Adrenal gland (tissue), 19 donors: ENCODE measurements at regions of chr3 and their contacts with region 1.

Region 1: DNA sequence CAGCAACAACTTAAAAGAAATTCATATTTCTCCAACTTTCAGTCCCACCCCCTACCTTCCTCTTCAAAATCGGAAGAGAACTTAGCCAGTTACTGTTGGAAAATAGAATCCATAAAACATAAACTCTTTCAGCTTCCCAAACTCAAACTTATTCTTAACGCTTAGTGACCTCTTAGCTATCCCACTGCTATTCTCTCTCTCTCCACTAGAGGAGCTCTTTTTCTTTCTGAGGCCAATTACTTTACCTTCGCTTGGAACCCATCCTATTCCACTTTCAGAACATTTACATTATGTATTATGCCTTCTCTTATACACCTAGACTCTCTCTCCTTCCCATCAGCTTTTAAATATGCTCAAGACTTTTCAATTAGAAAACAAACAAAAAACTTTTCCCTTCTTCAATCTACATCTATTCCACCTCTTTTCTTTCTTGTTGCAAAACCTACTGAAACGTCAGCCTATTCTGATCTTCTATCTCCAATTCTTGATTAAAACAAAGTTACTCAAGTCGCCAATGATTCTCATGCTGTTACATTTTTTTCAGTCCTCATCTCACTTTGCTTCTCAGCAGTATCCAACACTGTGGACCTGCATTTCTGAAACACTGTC is 13.4 kb upstream of the GHSR start:
- DNase-seq: no peak
- H3K4me3 ChIP-seq: no peak overlapping the region
- H3K27ac ChIP-seq: no peak overlapping the region
- H3K4me1 ChIP-seq: no peaks in the 10 kb centered on the region
- H3K27me3 ChIP-seq: no peaks in the 10 kb centered on the region
- CTCF ChIP-seq: peak; percentile 65 to 95 (median 84)
- POLR2A ChIP-seq: no peak

Region 2: GRCh38 chr3:171974986-171975837 is 486.4 kb before region 1 on chr3:
- intact Hi-C with region 1: no loop called
- DNase-seq: no peak
- H3K4me3 ChIP-seq: no peak overlapping the region
- H3K27ac ChIP-seq: peak overlapping the region in 1 of 5 donors; percentile 18
- H3K4me1 ChIP-seq: no peaks in the 10 kb centered on the region
- H3K27me3 ChIP-seq: no peaks in the 10 kb centered on the region
- CTCF ChIP-seq: no peak
- POLR2A ChIP-seq: no peak

Region 3: GRCh38 chr3:172355839-172356238 is 105.8 kb before region 1 on chr3:
- intact Hi-C with region 1: loop called in 1 of 2 experiments (anchors 10 kb)
- DNase-seq: peak in 3 of 7 donors; percentile 38 to 44 (median 41)
- H3K4me3 ChIP-seq: no peak overlapping the region
- H3K27ac ChIP-seq: peak overlapping the region in 2 of 5 donors; percentile 3 to 7
- H3K4me1 ChIP-seq: peaks cover 0 to 22% of the 10 kb centered on the region in 2 donors
- H3K27me3 ChIP-seq: no peaks in the 10 kb centered on the region
- CTCF ChIP-seq: no peak
- POLR2A ChIP-seq: no peak